ENCODE measurements at regions of chr14 and their contacts with region 1.

Region 1: GRCh38 chr14:70907176-70907995 is at the start of gene PCNX1:
- DNase-seq: peak; percentile 36
- H3K4me3 ChIP-seq: peak within 1 kb of the TSS; percentile 88
- CTCF ChIP-seq: peak; percentile 79

Region 2: GRCh38 chr14:70856851-70857495 is 50.4 kb before region 1 on chr14:
- CTCF ChIA-PET with region 1: interaction called, 20 read pairs
- POLR2A ChIA-PET with region 1: interaction called, 3 read pairs
- DNase-seq: peak; percentile 92
- H3K4me3 ChIP-seq: no peak overlapping the region
- CTCF ChIP-seq: no peak

Region 3: DNA sequence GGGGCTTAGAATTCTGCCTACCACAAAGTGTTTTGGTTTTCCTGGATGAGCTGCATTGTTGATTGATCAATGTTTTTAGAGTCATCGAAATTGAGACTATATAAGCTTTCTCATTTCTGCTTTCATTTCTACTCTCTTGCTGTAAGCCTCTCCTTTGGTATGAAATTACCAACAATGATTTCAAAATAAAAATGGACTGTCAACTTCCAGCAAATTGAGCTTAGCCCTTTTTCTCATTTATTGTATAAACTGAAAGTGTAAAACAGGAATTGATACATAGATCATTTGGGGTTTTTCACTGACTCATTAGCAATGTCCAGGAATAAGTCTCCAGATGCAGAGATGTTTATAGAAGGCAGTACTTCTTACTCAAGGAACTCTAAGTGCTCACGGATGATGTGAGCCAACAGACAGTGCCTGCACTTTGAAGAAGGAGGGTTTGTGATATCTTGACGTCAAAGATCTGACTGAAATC is 20.1 kb before region 1 on chr14:
- CTCF ChIA-PET with region 1: interaction called, 27 read pairs
- POLR2A ChIA-PET with region 1: no interaction called
- DNase-seq: peak; percentile 60
- H3K4me3 ChIP-seq: no peak overlapping the region
- CTCF ChIP-seq: no peak

Region 4: DNA sequence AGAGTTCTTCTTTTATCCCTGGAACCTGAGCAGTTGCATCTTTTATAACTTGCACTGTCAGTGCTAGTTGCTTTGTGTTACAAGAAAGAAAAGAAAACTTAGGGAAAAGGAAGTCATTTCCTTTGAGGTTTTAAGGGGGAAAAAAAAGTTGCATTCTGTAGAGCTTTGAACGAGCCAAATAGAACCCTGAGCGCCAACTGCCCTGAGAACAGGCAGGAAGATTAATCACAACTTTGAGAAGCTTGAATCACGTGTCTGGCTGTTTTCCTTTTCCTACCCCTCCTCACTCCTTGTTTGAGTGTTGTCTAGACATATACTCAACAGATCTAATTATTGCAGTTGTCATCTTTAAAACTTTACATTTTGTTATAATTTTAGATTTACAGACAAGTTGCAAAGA is 12.4 kb after region 1 on chr14:
- CTCF ChIA-PET with region 1: interaction called, 46 read pairs
- POLR2A ChIA-PET with region 1: interaction called, 3 read pairs
- DNase-seq: no peak
- H3K4me3 ChIP-seq: no peak overlapping the region
- CTCF ChIP-seq: no peak

Region 5: GRCh38 chr14:70926235-70926830 is 18.9 kb after region 1 on chr14:
- CTCF ChIA-PET with region 1: interaction called, 46 read pairs
- POLR2A ChIA-PET with region 1: no interaction called
- DNase-seq: no peak
- H3K4me3 ChIP-seq: no peak overlapping the region
- CTCF ChIP-seq: no peak

Region 6: DNA sequence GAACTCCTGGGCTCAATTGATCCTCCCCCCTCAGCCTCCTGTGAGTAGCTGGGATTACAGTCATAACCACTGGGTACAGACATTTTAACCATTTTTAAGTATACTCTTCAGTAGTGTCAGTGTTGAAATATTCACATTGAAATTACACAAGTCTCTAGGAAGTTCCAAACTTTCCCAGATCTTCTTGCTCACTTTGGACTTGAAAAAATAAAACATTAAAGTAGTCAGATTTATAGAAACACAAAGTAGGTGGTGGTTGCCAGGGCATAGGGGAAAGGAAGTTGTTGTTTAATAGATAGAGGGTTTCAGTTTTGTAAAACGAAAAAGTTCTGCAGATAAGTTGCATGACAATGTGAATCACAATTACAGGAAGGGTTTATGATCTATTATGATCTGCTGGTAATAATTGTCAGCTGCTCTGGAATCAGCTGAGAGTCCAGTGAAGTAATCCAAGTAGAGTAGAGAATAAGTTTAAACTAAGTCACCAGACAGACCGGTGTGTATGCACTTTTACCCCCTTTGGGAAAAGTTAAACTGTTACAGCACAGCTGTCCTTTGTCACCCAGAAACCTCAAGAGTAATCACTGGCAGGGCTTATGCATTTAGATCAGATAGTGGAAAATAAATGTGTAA is 27.2 kb after region 1 on chr14:
- CTCF ChIA-PET with region 1: interaction called, 20 read pairs
- POLR2A ChIA-PET with region 1: no interaction called
- DNase-seq: peak; percentile 31
- H3K4me3 ChIP-seq: no peak overlapping the region
- CTCF ChIP-seq: no peak